ENCODE measurements at regions of chr5 and their contacts with region 1.

Region 1: DNA sequence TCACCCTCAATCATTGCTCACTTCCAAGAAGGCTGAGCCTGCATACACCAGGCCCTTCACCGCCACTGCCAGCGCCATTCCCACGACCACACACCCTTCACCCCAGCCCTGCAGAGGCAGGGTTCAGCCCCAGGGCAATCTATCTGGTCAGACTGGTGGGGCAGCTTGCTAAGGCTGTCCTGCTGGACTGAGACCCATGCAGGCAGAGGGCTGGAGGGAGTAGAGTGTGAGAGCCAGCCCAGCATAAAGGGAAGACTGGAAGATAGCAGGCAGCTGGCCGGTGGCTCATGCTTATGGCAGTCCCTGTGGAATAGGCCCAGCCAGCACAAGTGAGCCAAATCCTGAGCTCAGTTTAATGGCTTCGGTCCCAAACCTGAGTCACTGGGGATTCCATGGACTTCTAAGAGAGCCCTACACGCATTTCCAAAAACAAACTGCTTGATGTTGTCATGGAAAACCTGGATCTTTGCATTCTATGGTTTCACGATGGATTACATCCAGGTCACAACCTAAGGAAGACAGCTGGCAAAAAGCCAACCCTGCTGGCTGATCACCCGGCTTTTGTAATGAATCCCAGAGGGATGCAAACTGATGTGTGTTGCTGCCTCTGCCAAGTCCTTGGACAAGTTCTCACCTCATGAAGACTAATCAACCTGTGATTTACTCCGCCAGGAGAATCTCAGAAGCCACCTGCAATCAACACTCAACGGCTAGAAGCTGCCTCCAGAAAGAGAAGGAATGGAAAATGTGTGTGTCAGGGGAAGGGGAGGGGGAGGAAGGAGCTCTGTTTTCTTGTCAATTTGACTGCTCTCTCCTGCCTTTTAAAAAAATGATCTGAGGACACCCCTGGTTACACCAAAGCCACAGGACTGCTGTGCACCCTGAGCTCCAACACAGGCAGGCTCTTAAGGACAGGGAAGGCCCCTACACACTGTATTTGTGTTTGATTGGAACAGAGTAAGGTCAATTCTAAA is 143.6 kb downstream of the LHFPL2 start:
- DNase-seq: peak; percentile 99
- H3K4me3 ChIP-seq: no peak overlapping the region
- H3K27ac ChIP-seq: peak overlapping the region; percentile 96
- H3K4me1 ChIP-seq: peaks cover 48% of the 10 kb centered on the region
- H3K27me3 ChIP-seq: no peaks in the 10 kb centered on the region
- CTCF ChIP-seq: no peak

Region 2: DNA sequence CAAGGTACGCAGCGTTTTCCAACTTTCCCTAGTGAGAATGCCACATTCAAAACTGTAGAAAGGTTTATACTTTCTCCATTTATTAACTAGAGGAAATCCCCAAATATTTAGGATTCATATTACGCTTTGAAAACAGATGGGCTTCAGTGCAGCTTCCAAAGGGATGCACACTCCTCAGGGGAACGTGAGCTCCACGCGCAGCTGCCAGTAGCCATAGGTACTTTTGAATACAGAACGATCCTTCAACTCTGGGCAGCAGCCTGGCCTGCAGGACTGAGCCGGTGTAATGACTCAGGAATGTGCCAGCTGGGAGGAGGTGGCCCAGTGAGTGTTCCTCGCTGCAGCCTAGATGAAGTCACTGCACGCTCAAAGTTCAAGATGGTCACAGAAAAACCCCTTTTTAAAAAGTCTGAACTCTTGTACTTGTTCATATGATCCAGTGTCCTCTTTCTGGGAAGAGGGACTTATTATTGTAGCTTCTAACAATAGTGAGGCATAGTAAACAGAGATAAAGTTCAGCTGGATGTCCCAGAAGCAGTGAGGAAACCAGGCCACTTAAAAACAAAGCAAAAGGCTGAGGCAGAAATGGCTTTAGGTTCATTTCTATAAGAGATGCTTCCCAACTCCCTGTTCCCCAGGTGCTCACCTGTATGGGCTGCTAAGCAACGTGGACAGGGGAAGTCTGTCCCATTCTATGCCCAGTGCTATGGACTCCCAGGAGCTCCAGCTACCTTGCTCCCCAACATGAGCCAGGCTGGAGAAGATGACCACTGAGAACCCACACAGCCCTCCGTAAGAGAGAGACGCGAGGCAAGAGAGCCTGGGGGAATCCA is 13.6 kb after region 1 on chr5:
- CTCF ChIA-PET with region 1: no interaction called
- dilution Hi-C with region 1: no loop called
- in situ Hi-C with region 1: no loop called
- intact Hi-C with region 1: loop called (anchors 2 kb)
- DNase-seq: peak; percentile 92
- H3K4me3 ChIP-seq: no peak overlapping the region
- H3K27ac ChIP-seq: peak overlapping the region; percentile 92
- H3K4me1 ChIP-seq: peaks cover 36% of the 10 kb centered on the region
- H3K27me3 ChIP-seq: no peaks in the 10 kb centered on the region
- CTCF ChIP-seq: no peak

Region 3: DNA sequence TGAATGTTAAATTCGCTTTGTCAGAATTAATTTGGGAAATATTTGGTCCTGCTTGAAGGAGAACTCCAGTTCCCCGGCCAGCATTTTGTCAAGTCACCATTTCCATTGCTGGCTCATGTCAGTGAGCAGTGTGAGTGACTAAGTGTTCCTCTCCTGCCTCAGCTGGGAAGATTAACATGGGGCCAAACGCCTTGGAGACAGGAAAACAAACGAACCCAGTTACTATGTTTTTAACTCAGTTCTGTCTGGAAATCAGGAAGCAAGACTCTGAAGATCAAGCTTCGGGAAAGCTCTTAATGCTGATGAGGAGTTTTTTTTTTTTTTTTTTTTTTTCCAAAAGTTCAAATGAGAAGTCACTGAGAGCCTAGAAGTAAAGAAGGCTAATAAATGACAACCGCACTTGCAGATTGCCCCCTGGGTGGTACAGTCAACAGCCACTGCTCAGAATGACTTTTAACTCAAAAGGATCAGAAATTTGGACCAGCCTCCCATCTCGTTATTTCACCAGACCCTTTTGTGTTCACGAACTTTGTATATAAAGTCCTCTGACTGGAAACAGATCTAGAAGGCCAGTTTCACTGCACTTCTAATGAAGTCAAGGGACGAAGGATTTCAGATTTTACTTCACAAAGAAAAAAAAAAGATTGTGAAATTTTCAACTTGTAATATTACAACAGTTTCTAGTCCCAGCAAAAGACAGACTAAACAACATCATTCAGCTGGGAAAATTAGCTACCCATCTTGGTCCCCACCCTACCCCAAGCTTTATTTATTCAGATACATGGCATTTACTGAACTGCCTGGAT is 22.3 kb after region 1 on chr5:
- CTCF ChIA-PET with region 1: interaction called, 3 read pairs
- dilution Hi-C with region 1: no loop called
- in situ Hi-C with region 1: no loop called
- intact Hi-C with region 1: loop called (anchors 2 kb)
- DNase-seq: peak; percentile 89
- H3K4me3 ChIP-seq: no peak overlapping the region
- H3K27ac ChIP-seq: peak overlapping the region; percentile 98
- H3K4me1 ChIP-seq: peaks cover 50% of the 10 kb centered on the region
- H3K27me3 ChIP-seq: no peaks in the 10 kb centered on the region
- CTCF ChIP-seq: no peak

Region 4: DNA sequence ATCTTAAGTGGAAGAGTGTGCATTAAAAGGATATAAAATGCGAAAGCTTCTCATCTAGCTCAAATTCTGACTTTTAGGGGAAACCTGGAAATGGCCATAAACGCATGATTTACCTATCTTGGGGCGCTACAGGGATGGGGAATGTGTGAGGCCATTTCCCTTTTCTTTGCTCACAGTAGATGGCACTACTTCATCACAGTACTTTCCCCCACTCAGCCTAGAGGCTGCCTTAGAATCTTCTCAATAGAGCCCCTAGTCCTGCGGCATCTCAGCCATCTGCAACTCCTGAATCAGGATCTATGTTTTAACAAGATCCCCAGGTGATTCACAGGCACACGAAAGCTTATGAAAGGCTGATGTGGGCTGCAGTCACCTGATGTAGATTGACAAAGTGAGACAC is 32.8 kb after region 1 on chr5:
- CTCF ChIA-PET with region 1: no interaction called
- dilution Hi-C with region 1: no loop called
- in situ Hi-C with region 1: no loop called
- intact Hi-C with region 1: no loop called
- DNase-seq: peak; percentile 91
- H3K4me3 ChIP-seq: no peak overlapping the region
- H3K27ac ChIP-seq: peak overlapping the region; percentile 56
- H3K4me1 ChIP-seq: peaks cover 37% of the 10 kb centered on the region
- H3K27me3 ChIP-seq: no peaks in the 10 kb centered on the region
- CTCF ChIP-seq: peak; percentile 57 to 58

Measured in mammary epithelial cell (primary cell).